K562 (cell line): ENCODE measurements at regions of chr9 and their contacts with region 1.

Region 1: GRCh38 chr9:128304149-128304974 is 17.9 kb downstream of the TRUB2 start:
- DNase-seq: no peak
- ATAC-seq: no peak
- H3K4me3 ChIP-seq: no peak overlapping the region
- H3K27ac ChIP-seq: no peak overlapping the region
- H3K4me1 ChIP-seq: peaks cover 23 to 37% of the 10 kb centered on the region in 2 experiments
- H3K27me3 ChIP-seq: no peaks in the 10 kb centered on the region
- CTCF ChIP-seq: no peak
- EP300 ChIP-seq: no peak
- POLR2A ChIP-seq: no peak
- RAD21 ChIP-seq: no peak

Region 2: GRCh38 chr9:128316421-128316820 is 12.1 kb after region 1 on chr9:
- CTCF ChIA-PET with region 1: no interaction called
- POLR2A ChIA-PET with region 1: interaction called, 38 read pairs
- in situ Hi-C with region 1: no loop called
- intact Hi-C with region 1: no loop called
- DNase-seq: no peak
- ATAC-seq: no peak
- H3K4me3 ChIP-seq: no peak overlapping the region
- H3K27ac ChIP-seq: no peak overlapping the region; the same call in 2 of the 3 replicates
- H3K4me1 ChIP-seq: peaks cover 3 to 6% of the 10 kb centered on the region in 2 experiments
- H3K27me3 ChIP-seq: no peaks in the 10 kb centered on the region
- CTCF ChIP-seq: no peak
- EP300 ChIP-seq: no peak
- POLR2A ChIP-seq: no peak
- RAD21 ChIP-seq: no peak

Region 3: GRCh38 chr9:128383007-128383753 is 78.8 kb after region 1 on chr9:
- CTCF ChIA-PET with region 1: no interaction called
- POLR2A ChIA-PET with region 1: no interaction called
- in situ Hi-C with region 1: no loop called
- intact Hi-C with region 1: no loop called
- DNase-seq: no peak
- ATAC-seq: no peak
- H3K4me3 ChIP-seq: no peak overlapping the region
- H3K27ac ChIP-seq: no peak overlapping the region
- H3K4me1 ChIP-seq: no peaks in the 10 kb centered on the region
- H3K27me3 ChIP-seq: no peaks in the 10 kb centered on the region
- CTCF ChIP-seq: no peak
- EP300 ChIP-seq: no peak
- POLR2A ChIP-seq: no peak
- RAD21 ChIP-seq: no peak

Region 4: DNA sequence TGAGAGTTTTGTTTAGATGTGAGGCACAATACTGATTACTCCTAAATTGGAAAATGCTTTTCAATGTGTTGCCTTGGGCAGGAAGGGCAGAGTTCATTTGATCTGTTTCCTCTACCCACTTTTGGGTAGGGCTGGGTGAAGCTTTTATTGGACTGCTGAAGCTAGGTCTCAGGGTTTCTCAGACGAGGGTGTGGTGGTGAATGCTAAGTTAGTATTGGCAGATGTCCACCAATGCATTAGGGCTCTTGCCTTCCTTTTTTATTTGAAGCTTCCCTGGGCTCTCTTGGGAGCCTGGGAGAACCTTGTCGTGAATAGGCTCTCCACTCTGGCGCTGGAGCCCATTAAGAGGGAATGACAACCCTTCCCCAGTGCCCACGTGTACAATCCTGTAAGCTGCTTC is 271.1 kb after region 1 on chr9:
- CTCF ChIA-PET with region 1: no interaction called
- POLR2A ChIA-PET with region 1: no interaction called
- in situ Hi-C with region 1: no loop called
- intact Hi-C with region 1: no loop called
- DNase-seq: no peak
- ATAC-seq: no peak
- H3K4me3 ChIP-seq: no peak overlapping the region
- H3K27ac ChIP-seq: no peak overlapping the region
- H3K4me1 ChIP-seq: no peaks in the 10 kb centered on the region
- H3K27me3 ChIP-seq: 0 out of 5 replicates have a peak, but pooled peaks cover 0 to 4% of the 10 kb centered on the region in 2 experiments
- CTCF ChIP-seq: no peak
- EP300 ChIP-seq: no peak
- POLR2A ChIP-seq: no peak
- RAD21 ChIP-seq: no peak